Posterior cingulate gyrus (tissue), 11 donors: ENCODE measurements at regions of chr11 and their contacts with region 1.

Region 1: GRCh38 chr11:73350908-73351636 is 25.1 kb upstream of the RELT start:
- DNase-seq: peak in 6 of 10 donors; percentile 51 to 93 (median 56)

Region 2: DNA sequence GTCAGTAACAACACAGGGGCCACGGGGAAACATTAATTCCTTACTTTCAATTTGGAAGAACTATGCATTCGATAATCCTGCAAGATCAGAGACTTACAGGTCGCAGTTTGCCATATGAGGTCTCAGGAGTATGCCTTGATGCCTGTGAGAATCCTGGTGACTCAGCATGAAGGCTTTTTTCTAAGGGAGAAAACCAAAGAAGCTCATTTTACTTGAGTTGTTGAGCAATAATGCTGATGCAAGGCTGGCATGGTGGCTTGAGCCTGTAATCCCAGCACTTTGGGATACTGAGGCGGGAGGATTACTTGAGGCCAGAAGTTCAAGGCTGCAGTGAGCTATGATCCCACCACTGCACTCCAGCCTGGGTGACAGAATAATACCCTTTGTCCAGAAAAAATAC is 510.3 kb before region 1 on chr11:
- intact Hi-C with region 1: no loop called
- DNase-seq: no peak

Region 3: DNA sequence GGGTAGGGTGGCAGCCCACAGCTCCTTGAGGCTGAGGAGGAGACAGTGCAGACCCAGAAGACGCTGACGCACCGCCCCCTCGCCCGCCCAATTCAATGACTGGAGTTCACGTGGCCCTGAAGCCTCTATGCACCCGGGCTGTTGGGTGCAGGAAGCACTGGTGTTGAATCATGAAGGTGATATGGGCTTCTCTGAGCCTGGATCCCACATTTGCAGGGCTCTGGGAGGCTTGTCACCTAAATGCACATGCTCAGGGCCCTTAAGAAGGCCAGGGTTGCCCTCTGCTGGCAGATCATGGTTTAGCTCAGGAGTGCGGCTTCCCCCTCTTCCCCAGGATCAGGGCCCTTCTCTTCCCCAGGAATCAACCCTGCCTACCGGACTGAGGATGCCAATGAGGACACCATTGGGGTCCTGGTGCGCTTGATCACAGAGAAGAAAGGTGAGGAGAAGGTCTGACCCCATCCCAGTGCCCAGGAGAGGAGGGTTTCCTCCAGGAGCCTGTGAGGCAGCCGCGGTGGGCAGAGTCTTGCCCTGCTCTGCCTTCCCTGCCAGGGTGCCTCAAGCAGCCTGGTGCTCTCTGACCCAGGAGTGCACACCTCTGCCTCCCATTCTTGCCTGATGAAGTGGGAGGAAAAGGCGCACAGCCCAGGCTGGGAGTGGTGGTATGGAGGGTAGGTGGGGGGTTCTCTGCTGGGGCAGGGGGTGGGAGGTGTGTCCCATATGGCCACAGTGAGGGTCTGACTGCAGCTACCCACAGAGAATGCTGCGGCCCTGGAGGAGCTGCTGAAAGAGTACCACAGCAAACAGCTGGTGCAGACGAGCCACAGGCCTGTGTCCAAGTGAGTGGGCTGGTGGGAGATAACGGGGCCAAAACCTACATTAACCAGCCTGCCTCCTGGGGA is 42.7 kb after region 1 on chr11:
- intact Hi-C with region 1: loop called (anchors 1 kb)
- DNase-seq: peak in 9 of 10 donors; percentile 72 to 96 (median 78)